ENCODE measurements at regions of chrX and their contacts with region 1.

Region 1: GRCh38 chrX:40097497-40098263 is at the start of gene BCOR:
- DNase-seq: no peak
- ATAC-seq: peak; percentile 27
- H3K4me3 ChIP-seq: peak within 1 kb of the TSS; percentile 69 to 75 (median 73)
- H3K27ac ChIP-seq: peak within 1 kb of the TSS; percentile 73
- H3K4me1 ChIP-seq: peaks cover 39% of the 10 kb centered on the region
- H3K27me3 ChIP-seq: no peaks in the 10 kb centered on the region
- CTCF ChIP-seq: no peak
- EP300 ChIP-seq: no peak
- POLR2A ChIP-seq: peak in 1 of 2 experiments; percentile 89; a peak in 2 of 4 replicates
- RAD21 ChIP-seq: peak; percentile 39; the same call in 1 of the 2 replicates
- total RNA-seq, gene BCOR: 15.2 and 18.6 TPM in 2 replicates

Region 2: DNA sequence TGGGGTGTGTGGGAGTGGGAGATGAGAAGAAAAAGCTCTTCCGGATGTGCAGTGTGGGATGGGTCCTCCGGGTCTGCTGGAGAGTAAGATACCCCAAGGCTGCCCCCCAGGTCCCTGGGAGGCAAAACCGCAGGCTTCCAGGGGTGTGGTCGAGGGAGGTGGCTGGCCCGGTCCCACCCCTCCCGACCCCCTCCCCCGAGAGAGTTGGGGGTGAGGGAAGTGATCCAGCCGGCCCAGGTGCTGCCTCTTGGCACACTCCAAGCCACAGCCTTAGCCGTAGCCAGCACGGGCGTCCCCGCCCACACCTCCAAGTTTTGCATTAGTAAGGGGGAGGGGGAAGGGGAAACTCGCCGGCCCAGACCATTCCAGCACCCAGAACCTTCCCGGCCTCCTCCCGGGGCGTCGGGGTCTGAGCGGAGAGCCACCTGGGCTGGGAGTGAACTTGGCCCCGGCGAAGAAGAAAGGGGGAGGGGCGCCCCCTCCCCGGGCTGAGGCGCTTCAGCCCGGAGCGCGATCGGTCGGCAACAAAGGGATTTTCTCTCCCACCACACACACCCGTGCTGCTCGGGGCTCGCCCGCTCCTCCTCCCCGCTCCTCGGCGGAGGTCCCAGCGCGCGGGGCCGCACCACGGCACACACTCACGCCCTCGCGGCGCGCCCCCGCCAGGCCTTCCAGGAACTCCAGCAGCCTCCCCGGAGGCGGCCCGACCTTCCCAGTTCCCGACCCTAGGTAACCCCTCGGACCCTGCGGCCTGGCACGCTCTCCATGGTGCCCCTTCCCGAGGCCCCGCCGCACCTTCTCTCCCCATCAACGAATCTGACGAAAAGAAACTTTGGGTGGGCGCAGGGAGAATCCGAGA is 14.3 kb before region 1 on chrX:
- CTCF ChIA-PET with region 1: no interaction called
- POLR2A ChIA-PET with region 1: interaction called, 13 read pairs
- in situ Hi-C with region 1: no loop called
- intact Hi-C with region 1: no loop called
- DNase-seq: no peak
- ATAC-seq: peak; percentile 58
- H3K4me3 ChIP-seq: peak overlapping the region; percentile 50 to 67 (median 52); a peak in 5 of 6 replicates
- H3K27ac ChIP-seq: peak overlapping the region; percentile 76
- H3K4me1 ChIP-seq: peaks cover 72% of the 10 kb centered on the region
- H3K27me3 ChIP-seq: no peaks in the 10 kb centered on the region
- CTCF ChIP-seq: no peak
- EP300 ChIP-seq: no peak
- POLR2A ChIP-seq: no peak
- RAD21 ChIP-seq: no peak

Region 3: GRCh38 chrX:40140706-40141499 is 43.2 kb after region 1 on chrX:
- CTCF ChIA-PET with region 1: no interaction called
- POLR2A ChIA-PET with region 1: interaction called, 15 read pairs
- in situ Hi-C with region 1: no loop called
- intact Hi-C with region 1: no loop called
- DNase-seq: peak; percentile 56
- ATAC-seq: peak; percentile 82
- H3K4me3 ChIP-seq: peak overlapping the region in 1 of 3 experiments; percentile 43; a peak in 1 of 6 replicates
- H3K27ac ChIP-seq: peak overlapping the region; percentile 54
- H3K4me1 ChIP-seq: peaks cover 50% of the 10 kb centered on the region
- H3K27me3 ChIP-seq: no peaks in the 10 kb centered on the region
- CTCF ChIP-seq: no peak
- EP300 ChIP-seq: no peak
- POLR2A ChIP-seq: no peak
- RAD21 ChIP-seq: no peak

Region 4: GRCh38 chrX:40175511-40176350 is 78.1 kb after region 1 on chrX:
- CTCF ChIA-PET with region 1: no interaction called
- POLR2A ChIA-PET with region 1: interaction called, 21 read pairs
- in situ Hi-C with region 1: no loop called
- intact Hi-C with region 1: no loop called
- DNase-seq: peak; percentile 47
- ATAC-seq: peak; percentile 39
- H3K4me3 ChIP-seq: peak overlapping the region; percentile 55 to 74 (median 64); a peak in 5 of 6 replicates
- H3K27ac ChIP-seq: peak overlapping the region; percentile 95
- H3K4me1 ChIP-seq: peaks cover 46% of the 10 kb centered on the region
- H3K27me3 ChIP-seq: no peaks in the 10 kb centered on the region
- CTCF ChIP-seq: 0 out of 2 replicates have a peak, but pooled peaks have one; percentile 5
- EP300 ChIP-seq: no peak
- POLR2A ChIP-seq: peak in 1 of 2 experiments; percentile 19; a peak in 2 of 4 replicates
- RAD21 ChIP-seq: no peak